ENCODE measurements at regions of chr1 and their contacts with region 1.

Region 1: GRCh38 chr1:41751804-41752513 is 166.8 kb downstream of the HIVEP3 start:
- DNase-seq: no peak
- ATAC-seq: no peak
- H3K4me3 Mint-ChIP-seq: peak overlapping the region; percentile 46
- H3K27ac Mint-ChIP-seq: peak overlapping the region; percentile 92
- H3K4me1 Mint-ChIP-seq: peaks cover 81% of the 10 kb centered on the region
- H3K27me3 Mint-ChIP-seq: no peaks in the 10 kb centered on the region
- CTCF ChIP-seq: no peak

Region 2: DNA sequence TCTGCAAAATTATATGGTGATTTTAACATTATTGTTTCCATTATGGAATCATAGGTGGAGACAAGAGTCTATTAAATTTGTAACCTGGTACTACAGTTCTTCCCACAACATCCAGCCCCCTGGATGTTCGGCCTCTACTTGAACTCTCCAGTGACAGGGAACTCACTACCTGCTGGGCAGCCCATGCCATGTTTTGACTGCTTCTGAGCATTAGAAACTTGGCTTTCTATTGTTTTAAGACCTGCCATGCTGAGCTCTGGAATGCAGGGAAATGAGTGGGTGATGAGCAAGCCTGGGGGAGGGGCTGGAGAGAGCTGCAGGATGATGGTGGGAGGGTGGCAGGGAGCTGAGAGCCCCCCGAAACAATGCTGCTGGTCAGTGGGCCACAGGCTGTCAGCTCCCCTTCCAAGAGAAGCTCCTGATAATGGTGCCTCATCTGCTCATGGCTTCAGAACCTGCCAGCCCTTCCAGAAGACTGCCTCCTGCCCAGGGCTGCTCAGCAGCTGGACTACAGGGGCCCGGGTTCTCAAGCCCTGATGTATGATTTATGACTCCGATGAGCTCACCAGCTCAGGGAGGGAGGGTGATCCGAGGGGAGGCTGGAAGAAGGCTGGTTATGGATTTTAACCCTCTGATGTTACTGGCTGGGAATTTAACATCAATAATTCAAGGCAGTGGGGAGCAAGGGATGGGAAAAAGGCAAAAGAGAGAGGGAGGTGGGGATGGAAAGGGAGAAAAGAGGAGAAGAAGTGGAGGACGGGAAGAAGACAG is 38.2 kb before region 1 on chr1:
- CTCF ChIA-PET with region 1: no interaction called
- POLR2A ChIA-PET with region 1: no interaction called
- intact Hi-C with region 1: no loop called
- DNase-seq: no peak
- ATAC-seq: no peak
- H3K4me3 Mint-ChIP-seq: no peak overlapping the region
- H3K27ac Mint-ChIP-seq: no peak overlapping the region
- H3K4me1 Mint-ChIP-seq: peaks cover 12% of the 10 kb centered on the region
- H3K27me3 Mint-ChIP-seq: no peaks in the 10 kb centered on the region
- CTCF ChIP-seq: no peak

Region 3: GRCh38 chr1:41739061-41739955 is 12.7 kb before region 1 on chr1:
- CTCF ChIA-PET with region 1: interaction called, 5 read pairs
- POLR2A ChIA-PET with region 1: interaction called, 19 read pairs
- intact Hi-C with region 1: no loop called
- DNase-seq: peak; percentile 95
- ATAC-seq: peak; percentile 47
- H3K4me3 Mint-ChIP-seq: peak overlapping the region; percentile 67
- H3K27ac Mint-ChIP-seq: peak overlapping the region; percentile 95
- H3K4me1 Mint-ChIP-seq: peaks cover 92% of the 10 kb centered on the region
- H3K27me3 Mint-ChIP-seq: no peaks in the 10 kb centered on the region
- CTCF ChIP-seq: no peak

Region 4: DNA sequence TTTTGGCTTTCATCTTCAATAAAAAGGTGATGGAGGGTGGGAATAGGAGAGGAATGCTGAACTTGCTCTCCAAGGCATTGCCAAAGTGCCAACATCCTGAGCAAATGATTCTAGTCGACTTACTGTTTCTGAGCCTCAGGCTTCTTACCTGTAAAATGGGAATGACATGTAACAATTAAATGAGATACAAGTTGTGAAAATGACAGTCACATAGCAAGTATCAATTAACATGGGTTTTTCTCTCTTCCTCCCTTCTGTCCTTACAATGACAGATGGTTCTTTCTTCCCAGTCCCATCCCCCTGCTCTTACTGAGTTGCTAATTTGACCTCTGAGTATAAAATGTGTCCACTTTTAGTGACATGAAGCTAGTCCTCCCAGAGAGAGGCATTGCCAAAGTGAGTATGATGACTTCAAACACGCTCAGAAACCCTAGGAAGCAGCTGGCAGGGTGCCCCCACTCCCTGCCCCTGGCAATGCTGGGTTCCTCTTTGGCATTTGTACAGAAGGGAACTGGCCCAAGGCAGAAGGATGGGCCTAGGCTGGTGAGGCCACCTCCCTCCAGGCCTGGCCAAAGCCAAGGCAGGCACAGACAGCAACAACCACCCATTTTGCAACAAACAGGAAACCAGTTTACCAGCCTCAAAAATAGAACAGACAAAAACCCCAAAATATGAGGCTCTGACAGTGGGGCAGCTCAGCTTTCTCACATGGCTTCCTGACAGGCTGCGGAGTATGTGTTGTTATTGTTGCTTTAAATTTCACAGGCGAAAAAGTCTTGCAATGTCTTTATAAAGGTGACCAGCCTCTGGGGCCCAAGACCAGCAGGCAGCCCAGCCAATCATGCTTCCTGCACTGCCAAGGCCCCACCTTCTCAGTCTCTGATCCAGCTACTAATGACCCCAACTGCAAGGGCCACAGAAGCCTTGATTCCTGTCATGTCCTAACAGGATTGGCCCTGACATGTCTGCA is 50.9 kb after region 1 on chr1:
- CTCF ChIA-PET with region 1: no interaction called
- POLR2A ChIA-PET with region 1: interaction called, 5 read pairs
- intact Hi-C with region 1: loop called (anchors 5 kb)
- DNase-seq: no peak
- ATAC-seq: no peak
- H3K4me3 Mint-ChIP-seq: no peak overlapping the region
- H3K27ac Mint-ChIP-seq: peak overlapping the region; percentile 86
- H3K4me1 Mint-ChIP-seq: peaks cover 83% of the 10 kb centered on the region
- H3K27me3 Mint-ChIP-seq: no peaks in the 10 kb centered on the region
- CTCF ChIP-seq: no peak

Region 5: DNA sequence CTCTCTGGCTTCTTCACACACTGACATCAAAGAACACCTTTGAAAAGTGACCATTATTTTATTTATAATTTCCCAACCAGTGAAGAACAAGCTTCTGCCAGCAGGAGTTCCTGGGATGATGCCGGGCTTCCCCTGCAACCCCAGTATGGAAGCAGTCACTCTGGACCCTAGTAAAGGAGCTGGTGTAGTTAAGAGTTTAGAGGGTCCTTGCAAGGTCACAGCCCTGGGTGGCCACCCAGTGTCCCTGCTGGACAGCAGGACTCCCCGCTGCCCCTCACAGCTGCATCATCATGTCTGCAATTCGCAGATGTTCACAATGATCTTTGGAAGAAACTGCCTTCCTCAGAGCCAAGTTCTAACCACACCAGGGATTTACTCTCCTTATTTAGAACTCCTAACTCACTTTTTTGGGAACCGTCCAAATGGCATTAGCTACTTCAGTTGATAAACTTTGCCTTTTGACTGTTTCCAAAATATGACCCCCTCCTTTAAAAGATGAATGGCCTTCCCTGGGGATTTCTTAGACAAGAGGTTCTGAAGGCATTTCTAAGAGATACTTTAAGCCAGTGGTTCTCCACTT is 76.1 kb after region 1 on chr1:
- CTCF ChIA-PET with region 1: no interaction called
- POLR2A ChIA-PET with region 1: no interaction called
- intact Hi-C with region 1: no loop called
- DNase-seq: no peak
- ATAC-seq: no peak
- H3K4me3 Mint-ChIP-seq: no peak overlapping the region
- H3K27ac Mint-ChIP-seq: no peak overlapping the region
- H3K4me1 Mint-ChIP-seq: no peaks in the 10 kb centered on the region
- H3K27me3 Mint-ChIP-seq: no peaks in the 10 kb centered on the region
- CTCF ChIP-seq: no peak

Region 6: GRCh38 chr1:41862384-41863174 is 110.6 kb after region 1 on chr1:
- CTCF ChIA-PET with region 1: no interaction called
- POLR2A ChIA-PET with region 1: interaction called, 4 read pairs
- intact Hi-C with region 1: loop called (anchors 2 kb)
- DNase-seq: peak; percentile 82
- ATAC-seq: peak; percentile 94
- H3K4me3 Mint-ChIP-seq: peak overlapping the region; percentile 14
- H3K27ac Mint-ChIP-seq: peak overlapping the region; percentile 85
- H3K4me1 Mint-ChIP-seq: peaks cover 42% of the 10 kb centered on the region
- H3K27me3 Mint-ChIP-seq: no peaks in the 10 kb centered on the region
- CTCF ChIP-seq: no peak

Measured in activated CD8-positive, alpha-beta T cell treated with anti-CD3 and anti-CD28 coated beads for 36 hours (primary cell).